BJ (cell line): ENCODE measurements at regions of chr6 and their contacts with region 1.

Region 1: DNA sequence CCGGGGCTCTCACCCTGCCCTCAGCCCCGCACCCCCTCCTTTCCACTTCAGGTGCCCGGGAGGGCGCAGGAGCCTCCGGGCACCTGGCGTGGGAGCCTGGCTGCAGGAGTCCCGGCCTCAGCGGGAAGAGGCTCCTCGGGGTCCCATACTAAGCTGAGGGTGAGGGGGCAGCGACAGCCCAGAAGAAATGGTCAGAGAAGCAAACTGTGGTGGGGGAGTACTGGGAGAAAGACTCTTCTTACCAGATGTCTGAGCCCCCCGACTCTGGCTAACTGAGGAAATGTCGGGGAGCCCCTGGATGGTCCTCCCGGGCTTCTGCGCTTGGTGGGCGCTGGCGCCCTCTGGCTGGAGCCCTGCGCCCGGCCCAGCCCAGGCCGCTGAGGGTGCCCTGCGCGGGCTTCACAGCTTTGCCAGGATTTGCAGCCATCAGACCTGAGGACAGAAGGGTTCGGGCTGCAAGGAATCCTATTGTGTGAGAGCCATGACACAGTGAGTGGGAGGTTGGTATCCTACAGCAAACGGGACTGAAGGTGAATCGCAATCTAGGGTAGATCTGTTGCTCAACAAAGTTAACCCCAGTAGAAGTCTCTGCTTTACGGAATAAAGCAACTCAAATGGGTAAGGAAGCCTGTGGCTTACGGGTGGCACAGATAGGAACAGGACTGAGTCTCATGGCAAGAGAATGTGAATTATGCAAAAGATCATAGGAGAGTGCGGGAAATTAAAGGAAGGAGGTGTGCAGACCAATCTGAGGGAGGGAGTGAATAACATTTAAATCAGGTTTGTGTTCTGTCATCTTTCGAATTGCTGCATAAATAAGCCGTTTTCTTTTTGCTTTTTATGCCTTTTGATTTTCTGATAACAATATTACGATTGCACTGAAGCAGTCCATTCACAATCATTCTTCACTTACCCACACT is 639 bp upstream of the RCAN2 start:
- DNase-seq: no peak
- H3K4me3 ChIP-seq: peak overlapping the region; percentile 59
- H3K27me3 ChIP-seq: peaks cover 8% of the 10 kb centered on the region
- CTCF ChIP-seq: peak; percentile 88

Region 2: DNA sequence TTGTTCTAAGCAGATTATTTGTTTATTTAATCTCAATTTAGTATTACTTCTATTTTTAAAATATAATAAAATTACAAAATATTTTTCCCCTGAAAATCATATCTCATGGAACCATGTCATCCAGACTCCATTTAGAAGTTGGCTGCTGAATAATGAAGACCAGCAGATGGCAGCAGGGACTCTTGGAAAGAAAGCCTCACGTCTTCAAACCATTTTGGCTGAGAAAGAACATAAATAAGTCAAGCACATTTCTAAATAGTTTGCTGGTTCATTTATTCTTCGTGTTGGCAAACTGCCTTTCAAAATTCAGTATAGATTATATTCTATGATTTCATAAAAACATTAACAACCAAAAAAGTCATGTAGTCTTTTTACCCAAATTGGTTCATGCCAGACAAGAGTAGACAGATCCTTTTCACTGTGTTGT is 72.3 kb before region 1 on chr6:
- CTCF ChIA-PET with region 1: interaction called, 39 read pairs
- POLR2A ChIA-PET with region 1: no interaction called
- DNase-seq: no peak
- H3K4me3 ChIP-seq: no peak overlapping the region
- H3K27me3 ChIP-seq: 0 out of 2 replicates have a peak, but pooled peaks cover 2% of the 10 kb centered on the region
- CTCF ChIP-seq: peak; percentile 76

Region 3: DNA sequence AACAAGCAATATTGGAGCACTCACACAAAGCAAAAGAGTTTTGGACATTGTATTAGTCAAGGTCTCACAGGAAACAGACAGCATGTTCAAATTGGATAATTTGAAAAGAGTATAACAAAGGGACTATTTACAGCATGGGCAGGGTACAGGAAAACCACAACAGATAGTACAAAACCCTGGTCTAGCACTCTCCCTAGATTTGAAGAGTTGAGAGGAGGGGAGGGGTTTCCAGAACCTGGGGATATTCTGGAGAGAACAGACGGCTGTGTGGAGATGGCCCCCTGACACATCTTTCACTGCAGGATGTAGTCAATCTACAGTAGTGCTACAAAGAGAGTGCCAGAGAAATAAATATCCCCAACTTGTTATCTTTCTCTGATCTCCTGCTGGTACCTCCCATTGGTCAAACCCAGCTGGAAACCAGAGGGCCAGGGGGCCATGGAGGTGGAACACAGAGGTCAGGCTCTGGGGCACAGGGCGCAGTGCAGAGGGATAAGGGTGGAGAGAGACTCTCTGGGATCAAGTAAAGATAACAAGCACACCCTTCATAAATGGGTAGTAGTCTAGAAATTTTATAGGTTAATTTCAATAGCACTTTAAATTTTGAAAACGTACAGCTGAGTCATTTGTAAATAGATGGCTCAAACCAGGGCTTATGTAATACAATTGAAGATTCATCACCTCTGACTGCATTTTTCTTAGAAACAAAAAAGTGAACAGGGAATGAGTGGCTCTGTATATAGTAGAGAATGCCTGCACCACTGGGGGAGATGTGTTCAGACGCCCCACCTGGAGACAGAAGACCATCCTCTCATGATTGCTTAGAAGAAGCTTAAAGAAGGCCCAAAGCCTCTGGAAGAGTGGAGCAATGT is 26.4 kb before region 1 on chr6:
- CTCF ChIA-PET with region 1: interaction called, 10 read pairs
- POLR2A ChIA-PET with region 1: no interaction called
- DNase-seq: no peak
- H3K4me3 ChIP-seq: no peak overlapping the region
- H3K27me3 ChIP-seq: no peaks in the 10 kb centered on the region
- CTCF ChIP-seq: no peak